BJ (cell line): ENCODE measurements at regions of chr11 and their contacts with region 1.

Region 1: DNA sequence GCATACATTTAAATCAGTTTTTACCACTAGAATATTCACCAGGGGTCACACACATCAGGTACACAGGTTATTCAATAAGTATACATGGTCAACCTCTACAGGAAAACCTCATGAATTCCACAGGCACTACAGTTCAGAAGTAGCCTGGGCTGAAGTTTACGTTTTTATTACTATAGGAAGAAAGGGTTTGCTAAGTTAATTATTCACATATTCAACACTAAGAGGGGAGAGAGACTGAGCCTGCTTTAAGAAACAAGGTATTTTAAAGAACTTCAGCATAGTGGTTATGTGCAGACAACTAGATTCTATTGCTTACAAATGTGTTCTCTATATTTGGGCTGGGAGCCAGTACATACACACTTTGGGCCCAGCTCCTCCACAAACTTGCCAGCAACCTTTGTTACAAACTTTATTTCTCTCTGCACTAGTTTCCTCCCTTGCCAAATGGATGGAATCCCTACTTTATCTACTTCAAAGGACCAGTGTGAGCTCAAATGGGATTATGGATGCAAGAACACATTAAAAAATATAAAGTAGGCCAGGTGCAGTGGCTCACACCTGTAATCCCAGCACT is 31.9 kb downstream of the IL18BP start:
- DNase-seq: no peak
- H3K4me3 ChIP-seq: no peak overlapping the region
- H3K27me3 ChIP-seq: no peaks in the 10 kb centered on the region
- CTCF ChIP-seq: no peak

Region 2: GRCh38 chr11:72040726-72041441 is 10.3 kb after region 1 on chr11:
- CTCF ChIA-PET with region 1: interaction called, 28 read pairs
- POLR2A ChIA-PET with region 1: no interaction called
- DNase-seq: peak; percentile 66
- H3K4me3 ChIP-seq: peak overlapping the region; percentile 75
- H3K27me3 ChIP-seq: no peaks in the 10 kb centered on the region
- CTCF ChIP-seq: no peak

Region 3: DNA sequence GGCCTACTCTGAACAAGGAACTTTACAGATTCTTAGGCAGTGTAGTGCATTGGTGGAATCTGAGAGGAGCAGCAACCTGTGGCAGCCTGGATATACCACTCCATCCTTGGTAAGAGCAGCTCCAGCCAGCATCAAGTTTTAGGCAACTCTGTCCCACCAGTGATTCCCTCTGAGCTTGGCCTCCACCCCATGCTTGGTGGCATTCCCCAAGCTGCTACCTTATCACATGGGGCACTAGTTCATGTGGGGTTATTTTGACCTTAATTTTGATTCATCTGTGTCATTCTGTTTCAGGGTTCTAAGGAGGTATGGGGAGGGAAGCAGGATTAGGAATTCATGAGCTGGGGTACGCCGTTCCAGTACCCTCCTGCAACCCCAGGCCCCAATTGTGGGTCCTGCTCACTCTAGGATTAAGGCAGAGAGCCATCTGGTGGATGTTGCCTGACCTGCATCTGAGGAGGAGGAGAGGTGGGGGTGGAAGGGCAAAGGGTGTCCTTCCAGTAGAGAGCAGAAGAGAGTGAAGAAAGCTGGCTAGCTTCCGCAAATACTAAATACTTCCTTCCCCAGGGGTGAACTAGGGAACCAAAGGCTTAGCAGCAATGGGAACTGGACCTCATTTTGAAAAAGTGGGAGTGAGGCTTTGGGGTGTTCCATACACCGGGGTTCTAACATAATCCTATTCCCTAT is 60.6 kb after region 1 on chr11:
- CTCF ChIA-PET with region 1: interaction called, 209 read pairs
- POLR2A ChIA-PET with region 1: interaction called, 6 read pairs
- DNase-seq: no peak
- H3K4me3 ChIP-seq: no peak overlapping the region
- H3K27me3 ChIP-seq: no peaks in the 10 kb centered on the region
- CTCF ChIP-seq: peak; percentile 90

Region 4: GRCh38 chr11:72144807-72145560 is 114.4 kb after region 1 on chr11:
- CTCF ChIA-PET with region 1: interaction called, 42 read pairs
- POLR2A ChIA-PET with region 1: interaction called, 5 read pairs
- DNase-seq: peak; percentile 88
- H3K4me3 ChIP-seq: no peak overlapping the region
- H3K27me3 ChIP-seq: no peaks in the 10 kb centered on the region
- CTCF ChIP-seq: no peak

Region 5: DNA sequence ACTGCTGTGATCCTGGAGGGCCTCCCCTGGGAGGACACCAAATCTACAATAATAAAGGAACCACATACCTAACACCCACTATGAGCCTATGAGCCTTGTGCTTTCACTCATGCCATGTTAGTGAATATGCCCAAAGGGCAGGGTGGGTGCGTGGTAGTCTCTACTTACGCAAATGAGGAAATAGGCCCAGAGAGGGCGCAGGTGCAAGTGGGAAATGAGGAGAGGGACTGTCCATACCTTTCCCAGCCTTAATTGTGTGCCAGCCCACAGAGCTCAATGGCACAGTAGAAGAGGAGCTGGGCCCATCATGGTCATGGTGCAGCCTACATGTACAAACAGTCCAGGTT is 142.1 kb after region 1 on chr11:
- CTCF ChIA-PET with region 1: no interaction called
- POLR2A ChIA-PET with region 1: no interaction called
- DNase-seq: no peak
- H3K4me3 ChIP-seq: no peak overlapping the region
- H3K27me3 ChIP-seq: no peaks in the 10 kb centered on the region
- CTCF ChIP-seq: no peak

Region 6: GRCh38 chr11:72430741-72431570 is 400.4 kb after region 1 on chr11:
- CTCF ChIA-PET with region 1: interaction called, 15 read pairs
- POLR2A ChIA-PET with region 1: no interaction called
- DNase-seq: no peak
- H3K4me3 ChIP-seq: no peak overlapping the region
- H3K27me3 ChIP-seq: no peaks in the 10 kb centered on the region
- CTCF ChIP-seq: peak; percentile 85